ENCODE measurements at regions of chr3 and their contacts with region 1.

Region 1: DNA sequence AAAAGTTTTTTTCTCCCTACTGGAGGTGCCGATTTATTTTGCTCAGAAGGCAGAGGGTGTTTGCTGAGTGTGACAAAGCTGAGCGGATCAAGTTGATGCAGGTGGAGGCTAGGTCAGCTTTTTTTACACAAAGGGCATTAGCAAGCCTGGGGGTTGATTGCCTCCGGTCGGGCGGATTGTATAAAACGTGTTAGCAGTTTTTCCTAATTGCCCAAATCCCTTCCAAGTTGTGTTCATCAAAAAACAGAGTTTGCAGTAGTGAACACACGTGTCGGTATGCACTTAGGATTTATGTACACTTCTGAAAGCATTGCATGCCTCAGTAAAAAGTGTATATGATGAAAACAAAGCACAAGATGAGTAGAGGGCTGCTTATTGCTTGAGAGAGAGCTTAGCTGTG is 2.6 kb downstream of the GPR160 start:
- DNase-seq: no peak
- H3K4me3 ChIP-seq: no peak overlapping the region
- H3K27ac ChIP-seq: no peak overlapping the region
- H3K27me3 ChIP-seq: peaks cover 0 to 46% (median 23%) of the 10 kb centered on the region in 45 donors
- CTCF ChIP-seq: no peak

Region 2: GRCh38 chr3:169984292-169984691 is 56.1 kb before region 1 on chr3:
- intact Hi-C with region 1: loop called in 1 of 2 experiments (anchors 2 kb)
- DNase-seq: no peak
- H3K4me3 ChIP-seq: no peak overlapping the region
- H3K27ac ChIP-seq: no peak overlapping the region
- H3K27me3 ChIP-seq: no peaks in the 10 kb centered on the region
- CTCF ChIP-seq: no peak

Region 3: DNA sequence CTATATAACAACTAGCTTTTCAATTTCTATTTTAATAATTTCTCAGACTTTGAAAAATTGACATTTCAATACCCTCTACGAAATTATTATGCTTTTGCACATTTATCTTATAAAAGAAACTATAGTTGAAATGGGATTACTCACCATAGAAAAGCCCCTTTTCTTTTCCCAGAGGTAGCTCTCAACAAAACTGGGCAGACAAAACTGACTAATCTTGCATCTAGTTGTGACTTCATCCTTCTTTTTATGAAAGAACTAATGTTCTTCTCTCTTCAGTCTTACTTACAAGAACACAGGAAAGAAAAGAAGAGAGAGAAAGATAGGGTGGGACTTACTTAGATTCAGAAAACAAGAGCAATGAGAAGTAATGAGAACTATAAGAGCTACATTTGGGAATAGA is 58.3 kb after region 1 on chr3:
- intact Hi-C with region 1: loop called in 1 of 2 experiments (anchors 2 kb)
- DNase-seq: no peak
- H3K4me3 ChIP-seq: no peak overlapping the region
- H3K27ac ChIP-seq: peak overlapping the region in 1 of 59 donors; percentile 6
- H3K27me3 ChIP-seq: no peaks in the 10 kb centered on the region
- CTCF ChIP-seq: no peak

Measured in dorsolateral prefrontal cortex (tissue), 120 donors.